Prostate gland (tissue), 2 donors: ENCODE measurements at regions of chr13 and their contacts with region 1.

Region 1: DNA sequence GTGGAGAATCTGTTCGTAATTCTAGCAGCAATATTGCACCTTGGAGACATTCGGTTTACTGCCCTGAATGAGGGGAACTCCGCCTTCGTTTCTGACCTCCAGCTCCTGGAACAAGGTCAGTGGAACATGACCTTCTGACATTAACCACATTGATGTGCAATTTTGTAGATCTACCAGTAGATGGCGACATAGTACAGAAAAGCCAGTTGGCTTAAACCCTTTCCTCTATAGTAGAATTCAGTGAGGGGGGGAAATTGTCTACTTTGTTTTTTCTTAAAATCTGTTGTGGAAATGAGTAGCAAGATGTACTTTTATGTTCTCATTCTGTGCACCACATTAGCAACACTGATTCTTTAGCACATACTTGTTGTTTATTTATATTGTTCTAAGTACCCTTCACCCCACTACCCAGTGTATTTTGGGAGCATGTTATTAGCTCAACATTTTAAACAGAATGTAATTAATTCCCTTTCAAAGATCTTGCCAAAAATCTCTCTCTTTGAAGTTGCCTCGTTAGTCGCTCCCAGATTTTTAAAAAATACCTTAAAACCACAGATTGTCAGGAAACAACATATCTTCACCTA is 332.2 kb downstream of the MYO16 start:
- DNase-seq: no peak
- H3K4me3 ChIP-seq: no peak overlapping the region
- H3K27ac ChIP-seq: no peak overlapping the region
- H3K4me1 ChIP-seq: no peaks in the 10 kb centered on the region
- H3K27me3 ChIP-seq: no peaks in the 10 kb centered on the region
- CTCF ChIP-seq: peak; percentile 62 to 93 (median 79)
- POLR2A ChIP-seq: no peak

Region 2: DNA sequence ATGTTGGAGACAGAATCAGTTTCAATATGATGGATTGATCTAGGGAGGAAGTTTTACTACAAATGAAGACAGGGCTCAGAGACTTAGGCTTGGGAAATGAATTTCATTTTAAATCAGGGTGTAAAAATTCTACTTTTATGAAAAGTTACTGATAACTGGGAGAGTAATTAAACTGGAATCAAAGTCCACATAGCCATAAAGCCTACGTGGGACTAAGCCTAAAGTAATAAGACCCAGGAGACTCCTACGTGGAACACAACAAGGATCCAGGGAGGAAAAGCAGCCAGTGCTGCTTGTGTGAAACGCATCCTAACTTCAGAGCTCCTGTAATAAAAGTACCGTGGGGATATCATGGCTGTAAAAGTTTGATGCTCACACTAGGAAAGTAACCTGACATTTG is 484.3 kb before region 1 on chr13:
- intact Hi-C with region 1: no loop called
- DNase-seq: no peak
- H3K4me3 ChIP-seq: no peak overlapping the region
- H3K27ac ChIP-seq: no peak overlapping the region
- H3K4me1 ChIP-seq: no peaks in the 10 kb centered on the region
- H3K27me3 ChIP-seq: no peaks in the 10 kb centered on the region
- CTCF ChIP-seq: no peak
- POLR2A ChIP-seq: no peak

Region 3: DNA sequence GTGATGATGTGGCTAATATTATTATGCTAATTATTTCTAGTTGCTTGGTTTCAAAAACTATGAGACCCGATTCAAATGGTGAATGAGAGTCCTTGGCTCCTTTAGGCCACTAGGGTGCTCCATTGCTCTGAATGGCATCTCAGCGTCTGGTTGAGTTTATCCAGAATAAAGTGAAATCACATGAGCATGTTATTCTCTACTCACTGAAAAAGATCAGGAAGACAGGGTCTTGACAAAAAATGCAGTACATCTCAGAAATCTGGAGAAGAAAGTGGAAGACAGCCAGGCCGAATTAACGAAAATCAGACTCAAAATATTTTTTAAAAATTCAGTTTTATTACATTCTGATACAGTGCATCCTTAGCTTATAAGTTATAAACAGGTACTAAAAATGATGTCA is 184.0 kb after region 1 on chr13:
- intact Hi-C with region 1: loop called (anchors 5 kb)
- DNase-seq: no peak
- H3K4me3 ChIP-seq: no peak overlapping the region
- H3K27ac ChIP-seq: no peak overlapping the region
- H3K4me1 ChIP-seq: no peaks in the 10 kb centered on the region
- H3K27me3 ChIP-seq: no peaks in the 10 kb centered on the region
- CTCF ChIP-seq: peak; percentile 36 to 79 (median 66)
- POLR2A ChIP-seq: no peak